ENCODE measurements at regions of chr9 and their contacts with region 1.

Region 1: DNA sequence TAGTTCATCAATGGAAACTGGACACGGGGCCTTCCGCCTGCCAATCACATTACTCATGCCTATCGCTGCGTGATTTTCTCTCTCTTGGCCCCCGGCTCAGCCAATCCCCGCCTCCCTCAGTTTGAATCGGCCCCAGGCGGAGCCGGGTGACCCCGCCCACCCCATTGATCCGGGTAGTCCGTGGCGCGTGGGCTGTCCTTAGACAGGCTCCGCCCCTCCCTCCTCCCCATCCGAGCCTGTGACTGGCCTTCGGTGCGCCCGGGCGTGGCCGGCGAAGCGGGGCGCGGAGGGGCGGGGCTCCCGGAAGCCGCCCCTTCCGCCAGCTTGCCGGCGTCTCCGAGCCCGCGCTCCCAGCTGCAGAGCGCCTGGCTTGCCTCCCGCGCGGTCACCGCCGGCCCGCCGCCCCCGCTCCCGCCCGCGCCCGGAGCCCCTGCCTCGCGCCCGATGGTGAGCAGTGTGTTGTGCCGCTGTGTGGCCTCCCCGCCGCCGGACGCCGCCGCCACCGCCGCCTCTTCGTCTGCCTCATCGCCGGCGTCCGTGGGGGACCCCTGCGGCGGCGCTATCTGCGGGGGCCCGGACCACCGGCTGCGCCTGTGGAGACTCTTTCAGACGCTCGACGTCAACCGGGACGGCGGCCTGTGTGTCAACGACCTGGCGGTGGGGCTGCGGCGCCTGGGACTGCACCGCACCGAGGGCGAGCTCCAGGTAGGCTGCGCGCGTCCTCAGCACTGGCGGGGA is at the start of gene SLC25A25:
- DNase-seq: peak; percentile 100
- ATAC-seq: peak; percentile 83 to 95 (median 85)
- H3K4me3 ChIP-seq: peak within 1 kb of the TSS; percentile 94
- H3K4me3 Mint-ChIP-seq: peak within 1 kb of the TSS; percentile 94
- H3K27ac ChIP-seq: peak within 1 kb of the TSS; percentile 97
- H3K27ac Mint-ChIP-seq: no peak within 1 kb of the TSS
- H3K4me1 ChIP-seq: peaks cover 74% of the 10 kb centered on the region
- H3K4me1 Mint-ChIP-seq: peaks cover 44 to 49% of the 10 kb centered on the region in 2 donors
- H3K27me3 ChIP-seq: no peaks in the 10 kb centered on the region
- H3K27me3 Mint-ChIP-seq: no peaks in the 10 kb centered on the region
- CTCF ChIP-seq: no peak
- total RNA-seq, gene SLC25A25: 16.8 to 19.1 (median 18.9) TPM

Region 2: GRCh38 chr9:127770905-127771569 is 297.0 kb before region 1 on chr9:
- intact Hi-C with region 1: loop called (anchors 10 kb)
- DNase-seq: peak; percentile 93 to 96
- ATAC-seq: peak; percentile 80 to 93 (median 83)
- H3K4me3 ChIP-seq: peak overlapping the region; percentile 53
- H3K4me3 Mint-ChIP-seq: peak overlapping the region; percentile 87
- H3K27ac ChIP-seq: peak overlapping the region; percentile 90
- H3K27ac Mint-ChIP-seq: peak overlapping the region; percentile 95 to 99
- H3K4me1 ChIP-seq: peaks cover 82% of the 10 kb centered on the region
- H3K4me1 Mint-ChIP-seq: peaks cover 54 to 63% of the 10 kb centered on the region in 2 donors
- H3K27me3 ChIP-seq: no peaks in the 10 kb centered on the region
- H3K27me3 Mint-ChIP-seq: no peaks in the 10 kb centered on the region
- CTCF ChIP-seq: no peak

Region 3: GRCh38 chr9:128026773-128027541 is 41.1 kb before region 1 on chr9:
- intact Hi-C with region 1: loop called (anchors 2 kb)
- DNase-seq: peak; percentile 27 to 79
- ATAC-seq: peak; percentile 49 to 62 (median 58)
- H3K4me3 ChIP-seq: no peak overlapping the region
- H3K4me3 Mint-ChIP-seq: peak overlapping the region; percentile 73
- H3K27ac ChIP-seq: peak overlapping the region; percentile 93
- H3K27ac Mint-ChIP-seq: peak overlapping the region; percentile 95
- H3K4me1 ChIP-seq: peaks cover 89% of the 10 kb centered on the region
- H3K4me1 Mint-ChIP-seq: peaks cover 29 to 57% of the 10 kb centered on the region in 2 donors
- H3K27me3 ChIP-seq: no peaks in the 10 kb centered on the region
- H3K27me3 Mint-ChIP-seq: no peaks in the 10 kb centered on the region
- CTCF ChIP-seq: no peak

Region 4: DNA sequence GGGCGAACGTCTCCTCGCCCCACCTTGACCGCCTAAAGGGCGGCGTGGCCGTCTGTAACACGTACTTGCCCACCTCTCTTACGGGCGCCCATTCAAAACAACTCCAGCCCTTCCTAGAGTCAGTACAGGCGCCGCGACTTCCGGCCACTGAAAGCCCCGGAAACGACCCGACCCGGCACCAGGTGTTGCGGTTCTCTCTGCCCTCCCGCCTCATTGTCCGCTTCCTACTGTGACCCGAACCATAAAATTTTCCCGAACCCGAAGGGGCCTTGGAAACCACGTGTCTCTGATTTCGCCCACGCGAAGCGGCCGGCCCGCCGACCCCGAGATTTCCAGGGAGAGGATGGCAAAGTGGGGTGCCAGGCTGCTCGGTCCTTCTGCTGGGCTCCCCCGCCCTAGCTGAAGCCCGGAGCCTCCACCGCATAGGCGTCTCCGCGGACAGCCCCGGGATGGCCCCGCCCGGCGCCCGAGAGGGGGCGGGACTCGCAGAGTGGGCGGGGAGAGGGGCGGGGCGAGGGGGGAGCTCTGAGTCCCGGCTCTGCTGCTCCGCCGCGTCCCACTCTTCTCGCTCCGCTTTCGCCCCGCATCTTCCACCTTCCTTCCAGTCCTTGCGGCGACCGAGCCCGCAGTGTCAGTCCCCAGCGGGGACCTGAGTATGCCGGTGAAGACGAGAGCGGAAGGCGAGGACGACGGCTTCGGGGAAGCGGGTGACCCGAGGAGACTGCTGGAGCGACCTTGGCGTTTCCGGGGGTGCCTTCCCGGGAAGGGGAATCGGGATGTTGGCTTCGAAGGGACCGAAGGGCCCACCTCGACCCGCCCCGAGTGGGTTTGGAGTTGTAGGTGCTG is 60.2 kb after region 1 on chr9:
- intact Hi-C with region 1: loop called (anchors 2 kb)
- DNase-seq: peak; percentile 86 to 94
- ATAC-seq: peak; percentile 80 to 91 (median 82)
- H3K4me3 ChIP-seq: peak overlapping the region; percentile 100
- H3K4me3 Mint-ChIP-seq: peak overlapping the region; percentile 99
- H3K27ac ChIP-seq: peak overlapping the region; percentile 98
- H3K27ac Mint-ChIP-seq: peak overlapping the region; percentile 98 to 99
- H3K4me1 ChIP-seq: peaks cover 34% of the 10 kb centered on the region
- H3K4me1 Mint-ChIP-seq: peaks cover 24 to 35% of the 10 kb centered on the region in 2 donors
- H3K27me3 ChIP-seq: no peaks in the 10 kb centered on the region
- H3K27me3 Mint-ChIP-seq: peaks cover 5 to 8% of the 10 kb centered on the region in 2 donors
- CTCF ChIP-seq: no peak

Measured in natural killer cell (primary cell).